Cardiac septum (tissue), 1 donor: ENCODE measurements at regions of chr2 and their contacts with region 1.

Region 1: GRCh38 chr2:175366815-175367214 is 185.3 kb upstream of the ATP5MC3 start:
- DNase-seq: no peak

Region 2: DNA sequence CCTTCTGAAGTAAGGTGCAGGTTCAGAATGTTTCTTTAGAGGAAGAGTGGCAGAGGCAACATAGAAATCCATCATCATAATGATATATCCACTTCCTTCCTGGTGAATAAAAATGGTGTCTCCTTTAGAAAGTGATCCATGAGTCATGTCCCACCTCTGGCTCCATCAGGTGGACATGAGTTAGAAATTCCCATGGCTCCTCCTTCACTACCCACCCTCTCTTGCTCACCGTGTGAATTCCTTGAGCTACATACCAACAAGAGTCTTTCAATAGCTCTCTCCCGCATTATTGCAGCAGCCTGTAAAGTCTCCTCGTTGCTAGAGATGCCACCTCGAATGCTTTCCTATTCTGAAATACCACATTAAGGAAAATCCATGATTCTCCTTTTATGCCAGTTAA is 317.6 kb after region 1 on chr2:
- intact Hi-C with region 1: loop called (anchors 10 kb)
- DNase-seq: no peak